Heart left ventricle (tissue), 16 donors: ENCODE measurements at regions of chr2 and their contacts with region 1.

Region 1: DNA sequence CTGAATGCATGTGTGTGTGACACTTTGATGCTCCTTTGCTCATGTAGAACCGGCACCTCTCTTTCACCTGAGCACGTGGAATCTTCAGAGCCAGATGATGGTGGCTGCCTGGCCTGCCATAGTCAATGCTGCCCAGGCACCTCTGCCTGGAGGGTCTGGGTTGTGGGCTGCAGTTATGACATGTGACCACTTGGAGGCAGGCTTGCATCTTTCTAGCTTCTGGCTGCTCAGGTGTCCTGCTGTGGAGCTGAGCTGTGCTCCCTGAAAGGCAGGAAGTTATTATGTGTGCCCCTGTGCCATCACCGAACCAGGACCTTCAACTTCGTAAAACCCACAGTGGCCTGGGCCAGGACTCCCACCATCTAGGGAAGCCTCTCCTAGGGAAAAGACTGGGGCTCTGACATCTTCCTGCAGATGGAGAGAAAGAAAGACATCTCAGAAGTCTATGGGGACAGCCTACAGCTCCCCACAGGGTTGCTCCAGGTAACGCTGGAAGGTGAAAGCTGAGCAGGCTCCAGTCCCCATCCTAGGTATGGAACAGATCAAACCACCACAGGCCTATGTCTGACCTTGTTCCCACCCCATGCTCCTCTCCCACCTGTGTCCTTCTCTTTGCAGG is 30.2 kb downstream of the PSD4 start:
- DNase-seq: peak in 4 of 5 donors; percentile 55 to 68 (median 64)
- ATAC-seq: peak; percentile 67 to 81 (median 76)
- H3K4me3 ChIP-seq: no peak overlapping the region
- H3K27ac ChIP-seq: no peak overlapping the region
- H3K4me1 ChIP-seq: peaks cover 0 to 8% (median 2%) of the 10 kb centered on the region in 12 donors
- H3K27me3 ChIP-seq: no peaks in the 10 kb centered on the region
- CTCF ChIP-seq: peak; percentile 82 to 94 (median 86)
- POLR2A ChIP-seq: no peak

Region 2: GRCh38 chr2:112794131-112794733 is 409.8 kb before region 1 on chr2:
- intact Hi-C with region 1: no loop called
- DNase-seq: peak in 3 of 5 donors; percentile 26 to 45 (median 42)
- ATAC-seq: peak; percentile 42 to 73 (median 66)
- H3K4me3 ChIP-seq: no peak overlapping the region
- H3K27ac ChIP-seq: peak overlapping the region in 1 of 12 donors; percentile 61
- H3K4me1 ChIP-seq: peaks cover 0 to 21% (median 0%) of the 10 kb centered on the region in 12 donors
- H3K27me3 ChIP-seq: no peaks in the 10 kb centered on the region
- CTCF ChIP-seq: no peak
- POLR2A ChIP-seq: no peak

Region 3: DNA sequence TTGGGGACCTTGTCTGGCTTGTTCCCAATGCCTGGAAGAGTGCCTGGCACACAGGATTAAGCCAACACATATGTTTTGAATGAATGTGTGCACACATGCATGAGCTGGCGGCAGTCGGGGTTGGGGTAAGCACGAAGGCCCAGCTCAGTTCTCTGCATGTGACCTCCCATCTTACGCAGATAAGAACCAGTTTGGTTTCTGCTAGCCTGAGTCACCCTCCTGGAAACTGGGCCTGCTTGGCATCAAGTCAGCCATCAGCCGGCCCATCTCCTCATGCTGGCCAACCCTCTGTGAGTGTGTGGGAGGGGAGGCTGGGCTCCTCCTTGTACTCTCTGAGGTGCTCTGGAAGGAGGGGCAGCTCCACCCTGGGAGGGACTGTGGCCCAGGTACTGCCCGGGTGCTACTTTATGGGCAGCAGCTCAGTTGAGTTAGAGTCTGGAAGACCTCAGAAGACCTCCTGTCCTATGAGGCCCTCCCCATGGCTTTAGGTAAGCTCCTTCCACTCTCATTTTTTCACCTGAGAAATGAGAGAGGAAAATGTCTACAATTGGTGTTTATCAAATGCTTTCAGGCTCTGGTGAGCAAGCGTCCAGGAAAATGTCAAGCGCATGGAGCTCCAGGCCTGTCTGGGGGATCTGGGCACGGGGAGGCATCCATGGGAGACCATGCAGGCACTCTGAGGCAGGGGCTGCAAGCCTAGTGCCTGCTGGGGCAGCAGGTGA is 86.3 kb before region 1 on chr2:
- intact Hi-C with region 1: no loop called
- DNase-seq: no peak
- ATAC-seq: peak in 2 of 4 donors; percentile 36 to 49
- H3K4me3 ChIP-seq: no peak overlapping the region
- H3K27ac ChIP-seq: no peak overlapping the region
- H3K4me1 ChIP-seq: peaks cover 0 to 15% (median 0%) of the 10 kb centered on the region in 12 donors
- H3K27me3 ChIP-seq: no peaks in the 10 kb centered on the region
- CTCF ChIP-seq: no peak
- POLR2A ChIP-seq: no peak

Region 4: GRCh38 chr2:113370478-113371091 is 166.6 kb after region 1 on chr2:
- intact Hi-C with region 1: loop called (anchors 1 to 5 kb)
- DNase-seq: peak in 4 of 5 donors; percentile 55 to 64 (median 58)
- ATAC-seq: peak; percentile 77 to 95 (median 92)
- H3K4me3 ChIP-seq: no peak overlapping the region
- H3K27ac ChIP-seq: no peak overlapping the region
- H3K4me1 ChIP-seq: no peaks in the 10 kb centered on the region
- H3K27me3 ChIP-seq: no peaks in the 10 kb centered on the region
- CTCF ChIP-seq: peak; percentile 47 to 82 (median 71)
- POLR2A ChIP-seq: no peak

Region 5: GRCh38 chr2:113390124-113390849 is 186.3 kb after region 1 on chr2:
- intact Hi-C with region 1: loop called in 1 of 10 experiments (anchors 5 kb)
- DNase-seq: peak in 3 of 5 donors; percentile 33 to 52 (median 38)
- ATAC-seq: peak; percentile 51 to 85 (median 76)
- H3K4me3 ChIP-seq: peak overlapping the region in 6 of 12 donors; percentile 7 to 46 (median 28)
- H3K27ac ChIP-seq: peak overlapping the region in 2 of 12 donors; percentile 19 to 61
- H3K4me1 ChIP-seq: peaks cover 0 to 9% (median 0%) of the 10 kb centered on the region in 12 donors
- H3K27me3 ChIP-seq: peaks cover 0 to 5% (median 0%) of the 10 kb centered on the region in 9 donors
- CTCF ChIP-seq: peak; percentile 68 to 99 (median 94)
- POLR2A ChIP-seq: no peak